Panc1 (cell line): ENCODE measurements at regions of chr18 and their contacts with region 1.

Region 1: DNA sequence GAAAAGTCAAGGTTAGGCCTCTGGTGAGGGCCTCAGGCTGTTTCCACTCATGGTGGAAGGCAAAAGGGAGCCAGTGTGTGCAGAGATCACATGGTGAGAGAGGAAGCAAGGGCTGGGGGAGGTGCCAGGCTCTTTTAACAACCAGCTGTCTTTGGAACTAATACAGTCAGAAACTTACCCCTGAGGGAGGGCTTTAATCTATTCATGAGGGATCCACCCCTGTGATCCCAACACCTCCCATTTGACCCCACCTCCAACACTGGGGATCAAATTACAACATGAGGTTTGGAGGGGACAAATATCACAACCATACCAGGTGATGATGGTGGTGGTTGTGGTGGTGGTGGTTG is 10.9 kb downstream of the POLI start:
- DNase-seq: no peak
- ATAC-seq: no peak
- H3K4me3 ChIP-seq: no peak overlapping the region
- H3K27ac ChIP-seq: no peak overlapping the region
- H3K4me1 ChIP-seq: no peaks in the 10 kb centered on the region
- H3K27me3 ChIP-seq: no peaks in the 10 kb centered on the region
- CTCF ChIP-seq: no peak

Region 2: GRCh38 chr18:55387139-55387984 is 1107.2 kb after region 1 on chr18:
- CTCF ChIA-PET with region 1: no interaction called
- POLR2A ChIA-PET with region 1: interaction called, 12 read pairs
- in situ Hi-C with region 1: no loop called
- intact Hi-C with region 1: no loop called
- DNase-seq: no peak
- ATAC-seq: no peak
- H3K4me3 ChIP-seq: no peak overlapping the region
- H3K27ac ChIP-seq: no peak overlapping the region; the same call in 1 of the 2 replicates
- H3K4me1 ChIP-seq: no peaks in the 10 kb centered on the region; the same call in 1 of the 2 replicates
- H3K27me3 ChIP-seq: no peaks in the 10 kb centered on the region
- CTCF ChIP-seq: no peak